ENCODE measurements at regions of chr2 and their contacts with region 1.

Region 1: GRCh38 chr2:100673691-100674485 is 111.1 kb downstream of the PDCL3 start:
- DNase-seq: no peak
- ATAC-seq: peak in 7 of 8 donors; percentile 43 to 84 (median 81)
- H3K4me3 ChIP-seq: no peak overlapping the region
- H3K27ac ChIP-seq: no peak overlapping the region
- H3K4me1 ChIP-seq: peaks cover 0 to 12% (median 0%) of the 10 kb centered on the region in 9 donors
- H3K27me3 ChIP-seq: no peaks in the 10 kb centered on the region
- CTCF ChIP-seq: no peak

Region 2: GRCh38 chr2:100615471-100615870 is 58.4 kb before region 1 on chr2:
- intact Hi-C with region 1: loop called in 1 of 10 experiments (anchors 5 kb)
- DNase-seq: peak in 1 of 2 donors; percentile 10
- ATAC-seq: peak in 7 of 8 donors; percentile 56 to 92 (median 88)
- H3K4me3 ChIP-seq: no peak overlapping the region
- H3K27ac ChIP-seq: peak overlapping the region in 4 of 10 donors; percentile 6 to 58 (median 34)
- H3K4me1 ChIP-seq: no peaks in the 10 kb centered on the region
- H3K27me3 ChIP-seq: no peaks in the 10 kb centered on the region
- CTCF ChIP-seq: peak in 1 of 9 donors; percentile 10

Measured in heart right ventricle (tissue), 16 donors.